ENCODE measurements at regions of chr18 and their contacts with region 1.

Region 1: GRCh38 chr18:21134898-21135297 is 23.3 kb upstream of the ROCK1 start:
- DNase-seq: no peak
- ATAC-seq: peak in 2 of 8 donors; percentile 50 to 58
- H3K4me3 ChIP-seq: no peak overlapping the region
- H3K27ac ChIP-seq: no peak overlapping the region
- H3K4me1 ChIP-seq: peaks cover 0 to 7% (median 2%) of the 10 kb centered on the region in 9 donors
- H3K27me3 ChIP-seq: no peaks in the 10 kb centered on the region
- CTCF ChIP-seq: peak in 7 of 9 donors; percentile 11 to 63 (median 52)

Region 2: GRCh38 chr18:21004726-21005125 is 130.2 kb before region 1 on chr18:
- intact Hi-C with region 1: loop called in 1 of 10 experiments (anchors 10 kb)
- DNase-seq: peak in 1 of 2 donors; percentile 45
- ATAC-seq: peak; percentile 80 to 97 (median 92)
- H3K4me3 ChIP-seq: no peak overlapping the region
- H3K27ac ChIP-seq: peak overlapping the region in 9 of 10 donors; percentile 23 to 79 (median 50)
- H3K4me1 ChIP-seq: peaks cover 0 to 25% (median 20%) of the 10 kb centered on the region in 9 donors
- H3K27me3 ChIP-seq: no peaks in the 10 kb centered on the region
- CTCF ChIP-seq: no peak

Region 3: GRCh38 chr18:21038201-21038600 is 96.7 kb before region 1 on chr18:
- intact Hi-C with region 1: no loop called
- DNase-seq: no peak
- ATAC-seq: no peak
- H3K4me3 ChIP-seq: no peak overlapping the region
- H3K27ac ChIP-seq: no peak overlapping the region
- H3K4me1 ChIP-seq: peaks cover 0 to 17% (median 3%) of the 10 kb centered on the region in 9 donors
- H3K27me3 ChIP-seq: no peaks in the 10 kb centered on the region
- CTCF ChIP-seq: no peak

Region 4: GRCh38 chr18:21064347-21064746 is 70.6 kb before region 1 on chr18:
- intact Hi-C with region 1: no loop called
- DNase-seq: no peak
- ATAC-seq: no peak
- H3K4me3 ChIP-seq: no peak overlapping the region
- H3K27ac ChIP-seq: no peak overlapping the region
- H3K4me1 ChIP-seq: peaks cover 0 to 5% (median 0%) of the 10 kb centered on the region in 9 donors
- H3K27me3 ChIP-seq: no peaks in the 10 kb centered on the region
- CTCF ChIP-seq: no peak

Region 5: DNA sequence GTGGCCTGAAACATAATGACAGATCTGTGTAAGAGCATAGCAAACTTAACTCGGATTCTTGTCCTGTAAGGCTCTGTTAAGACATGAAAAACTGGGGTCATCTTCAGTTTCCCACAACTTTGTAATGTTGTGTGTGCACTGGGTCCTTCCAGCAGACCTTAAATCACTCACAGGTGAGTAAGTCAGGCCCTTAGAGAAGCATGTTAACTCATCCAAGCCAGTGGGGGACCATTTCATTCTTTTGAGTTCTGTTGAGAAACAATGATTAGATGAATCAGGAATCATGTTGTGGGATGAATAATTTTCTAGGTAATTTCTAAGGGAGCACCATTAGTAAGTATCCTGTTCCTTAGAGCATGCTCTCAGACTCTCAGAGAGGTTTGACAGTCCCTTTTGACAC is 298.5 kb after region 1 on chr18:
- intact Hi-C with region 1: no loop called
- DNase-seq: no peak
- ATAC-seq: no peak
- H3K4me3 ChIP-seq: no peak overlapping the region
- H3K27ac ChIP-seq: no peak overlapping the region
- H3K4me1 ChIP-seq: no peaks in the 10 kb centered on the region
- H3K27me3 ChIP-seq: no peaks in the 10 kb centered on the region
- CTCF ChIP-seq: no peak

Measured in heart right ventricle (tissue), 16 donors.